ENCODE measurements at regions of chr1 and their contacts with region 1.

Region 1: GRCh38 chr1:52404116-52404986 is at the starts of genes ORC1 and PRPF38A:
- DNase-seq: peak; percentile 95
- ATAC-seq: peak; percentile 87
- H3K4me3 ChIP-seq: peak within 1 kb of the TSS; percentile 99
- H3K27ac ChIP-seq: peak within 1 kb of the TSS; percentile 93
- H3K4me1 ChIP-seq: peaks cover 2 to 14% of the 10 kb centered on the region in 2 experiments; a peak in 2 of 4 replicates
- H3K27me3 ChIP-seq: no peaks in the 10 kb centered on the region
- CTCF ChIP-seq: peak; percentile 51 to 62 (median 54); a peak in 5 of 6 replicates
- POLR2A ChIP-seq: peak; percentile 95
- RAD21 ChIP-seq: no peak
- total RNA-seq, gene ORC1: 25.6 TPM
- total RNA-seq, gene PRPF38A: 50.2 TPM

Region 2: DNA sequence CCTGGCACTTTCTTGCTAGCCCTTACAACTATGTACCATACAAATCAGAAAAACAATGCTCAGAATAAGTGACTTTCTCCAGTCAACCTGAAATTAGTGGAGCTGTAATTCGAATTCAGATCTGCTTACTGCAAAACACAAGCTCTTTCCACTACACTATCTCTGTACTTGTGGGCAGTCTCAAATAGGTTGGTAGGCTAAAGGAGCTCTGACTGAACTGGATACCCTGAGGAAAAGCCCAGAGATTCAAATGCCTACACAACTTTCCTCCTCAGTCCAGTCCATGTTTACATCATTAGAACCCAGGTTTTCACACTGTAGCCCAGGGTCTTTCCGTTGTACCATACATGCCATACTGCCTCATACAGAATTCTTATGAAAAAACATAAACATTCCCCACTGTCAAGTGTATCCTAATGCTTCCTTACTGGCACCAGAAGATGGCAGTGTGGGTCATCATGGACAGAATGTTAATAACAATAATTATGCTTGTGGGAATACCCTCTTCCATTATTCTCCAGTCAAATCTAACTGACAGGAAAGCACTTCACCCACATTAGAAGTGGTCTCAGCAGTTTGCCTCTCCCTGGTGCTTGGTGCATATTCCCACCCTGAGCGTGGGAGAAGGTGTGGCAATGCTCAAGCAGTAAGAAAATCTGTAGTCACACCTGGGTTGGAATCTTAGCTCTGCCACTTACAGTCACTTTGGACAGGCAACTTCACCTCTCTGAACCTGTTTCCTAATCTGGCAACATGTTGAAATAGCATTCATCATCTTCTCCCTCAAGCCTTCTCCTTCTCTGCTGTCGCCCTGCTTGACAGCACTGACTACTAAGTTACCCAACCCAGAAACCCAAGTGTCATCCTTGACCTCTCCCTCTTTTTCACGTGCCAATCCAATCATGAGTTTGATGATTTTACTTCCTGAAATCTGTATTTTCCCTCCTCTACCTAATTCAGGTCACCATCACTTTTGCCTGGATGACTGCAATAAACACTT is 276.9 kb before region 1 on chr1:
- CTCF ChIA-PET with region 1: interaction called, 3 read pairs
- POLR2A ChIA-PET with region 1: no interaction called
- RAD21 ChIA-PET with region 1: no interaction called
- intact Hi-C with region 1: loop called (anchors 2 kb)
- DNase-seq: peak; percentile 57
- ATAC-seq: peak; percentile 98
- H3K4me3 ChIP-seq: no peak overlapping the region
- H3K27ac ChIP-seq: no peak overlapping the region
- H3K4me1 ChIP-seq: no peaks in the 10 kb centered on the region
- H3K27me3 ChIP-seq: no peaks in the 10 kb centered on the region
- CTCF ChIP-seq: peak; percentile 66 to 86 (median 81)
- POLR2A ChIP-seq: no peak
- RAD21 ChIP-seq: peak; percentile 88